ENCODE measurements at regions of chr2 and their contacts with region 1.

Region 1: DNA sequence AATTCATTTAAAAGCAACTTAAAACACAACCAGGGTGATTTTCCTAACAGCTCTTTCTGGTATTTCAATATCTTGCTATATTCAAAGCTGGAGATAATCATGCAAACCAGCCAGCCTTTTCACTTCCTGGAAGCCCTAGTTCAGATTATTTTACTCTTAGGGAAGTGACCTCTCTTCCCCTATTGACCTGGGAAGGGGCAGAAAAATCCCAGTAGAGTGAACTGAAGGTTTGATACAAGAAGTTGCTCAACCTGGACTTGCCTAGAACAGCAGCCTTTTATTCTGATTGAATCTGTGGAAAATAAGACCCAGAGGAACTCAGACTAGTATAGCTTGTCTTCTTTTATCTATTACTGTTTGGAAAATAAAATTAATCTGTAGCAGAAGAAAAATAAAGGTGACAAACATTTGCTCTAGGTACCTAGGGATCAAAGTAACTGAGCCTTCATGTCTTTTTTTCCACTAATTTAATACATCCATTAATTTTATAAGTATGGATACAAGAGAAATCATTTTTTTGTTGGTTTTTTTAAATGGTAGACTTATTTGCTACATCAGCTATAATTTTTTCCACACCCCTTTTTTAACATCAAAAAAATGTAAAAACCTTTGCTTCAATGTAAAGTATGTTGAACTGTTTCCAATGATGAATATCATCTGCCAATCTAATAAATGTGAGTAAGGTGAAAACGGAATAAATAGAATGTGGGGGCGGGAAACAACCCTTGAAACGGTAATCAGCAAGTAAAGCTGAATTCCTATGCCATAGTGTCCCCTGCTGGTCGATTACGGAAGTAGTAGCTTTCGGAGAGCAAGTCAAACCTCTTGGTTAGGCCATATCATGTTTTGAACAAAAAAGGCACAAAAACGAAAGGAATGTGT is 629.9 kb downstream of the NRXN1 start:
- DNase-seq: peak; percentile 77
- H3K4me3 Mint-ChIP-seq: no peak overlapping the region
- H3K27ac Mint-ChIP-seq: no peak overlapping the region
- H3K4me1 Mint-ChIP-seq: no peaks in the 10 kb centered on the region
- H3K27me3 Mint-ChIP-seq: no peaks in the 10 kb centered on the region

Region 2: GRCh38 chr2:48600204-48600813 is 1801.7 kb before region 1 on chr2:
- intact Hi-C with region 1: loop called (anchors 5 kb)
- DNase-seq: peak; percentile 71
- H3K4me3 Mint-ChIP-seq: no peak overlapping the region
- H3K27ac Mint-ChIP-seq: no peak overlapping the region
- H3K4me1 Mint-ChIP-seq: no peaks in the 10 kb centered on the region
- H3K27me3 Mint-ChIP-seq: peaks cover 7% of the 10 kb centered on the region

Region 3: DNA sequence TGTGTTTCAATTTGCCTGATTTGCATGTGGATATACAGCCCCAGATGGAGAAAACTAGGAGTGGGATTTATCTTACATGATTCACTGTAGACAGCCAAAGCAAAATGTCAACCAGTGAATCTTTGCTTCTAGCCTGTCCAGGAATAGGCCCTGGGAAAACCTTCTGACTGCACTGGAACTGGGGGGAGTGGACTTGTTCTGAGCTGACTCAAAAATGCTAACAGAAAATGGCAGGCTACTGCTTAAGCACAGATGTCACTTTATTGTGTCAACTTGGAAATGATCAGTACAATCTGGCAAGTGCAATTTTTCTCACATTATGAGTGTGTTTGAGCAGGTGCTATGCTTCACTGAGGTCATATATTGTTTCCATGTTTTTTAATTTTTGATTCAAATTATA is 36.2 kb after region 1 on chr2:
- intact Hi-C with region 1: no loop called
- DNase-seq: no peak
- H3K4me3 Mint-ChIP-seq: no peak overlapping the region
- H3K27ac Mint-ChIP-seq: no peak overlapping the region
- H3K4me1 Mint-ChIP-seq: no peaks in the 10 kb centered on the region
- H3K27me3 Mint-ChIP-seq: no peaks in the 10 kb centered on the region